ENCODE measurements at regions of chr11 and their contacts with region 1.

Region 1: GRCh38 chr11:95150946-95151684 is 61.5 kb downstream of the ENDOD1 start:
- DNase-seq: peak; percentile 90
- H3K4me3 Mint-ChIP-seq: peak overlapping the region; percentile 79
- H3K27ac Mint-ChIP-seq: peak overlapping the region; percentile 82
- H3K4me1 Mint-ChIP-seq: peaks cover 69% of the 10 kb centered on the region
- H3K27me3 Mint-ChIP-seq: no peaks in the 10 kb centered on the region
- CTCF ChIP-seq: peak; percentile 68

Region 2: GRCh38 chr11:94973099-94973968 is 177.8 kb before region 1 on chr11 and contains the starts of genes CWC15 and KDM4D:
- CTCF ChIA-PET with region 1: no interaction called
- intact Hi-C with region 1: loop called (anchors 5 kb)
- DNase-seq: peak; percentile 88
- H3K4me3 Mint-ChIP-seq: peak within 1 kb of the TSS; percentile 98
- H3K27ac Mint-ChIP-seq: peak within 1 kb of the TSS; percentile 98
- H3K4me1 Mint-ChIP-seq: peaks cover 9% of the 10 kb centered on the region
- H3K27me3 Mint-ChIP-seq: no peaks in the 10 kb centered on the region
- CTCF ChIP-seq: no peak
- total RNA-seq, gene CWC15: 38.8 and 48.6 TPM in 2 replicates
- total RNA-seq, gene KDM4D: 0.68 and 1.2 TPM in 2 replicates

Region 3: GRCh38 chr11:95364324-95365295 is 213.5 kb after region 1 on chr11:
- CTCF ChIA-PET with region 1: no interaction called
- intact Hi-C with region 1: loop called (anchors 10 kb)
- DNase-seq: peak; percentile 24
- H3K4me3 Mint-ChIP-seq: peak overlapping the region; percentile 50
- H3K27ac Mint-ChIP-seq: peak overlapping the region; percentile 79
- H3K4me1 Mint-ChIP-seq: peaks cover 29% of the 10 kb centered on the region
- H3K27me3 Mint-ChIP-seq: no peaks in the 10 kb centered on the region
- CTCF ChIP-seq: no peak

Region 4: DNA sequence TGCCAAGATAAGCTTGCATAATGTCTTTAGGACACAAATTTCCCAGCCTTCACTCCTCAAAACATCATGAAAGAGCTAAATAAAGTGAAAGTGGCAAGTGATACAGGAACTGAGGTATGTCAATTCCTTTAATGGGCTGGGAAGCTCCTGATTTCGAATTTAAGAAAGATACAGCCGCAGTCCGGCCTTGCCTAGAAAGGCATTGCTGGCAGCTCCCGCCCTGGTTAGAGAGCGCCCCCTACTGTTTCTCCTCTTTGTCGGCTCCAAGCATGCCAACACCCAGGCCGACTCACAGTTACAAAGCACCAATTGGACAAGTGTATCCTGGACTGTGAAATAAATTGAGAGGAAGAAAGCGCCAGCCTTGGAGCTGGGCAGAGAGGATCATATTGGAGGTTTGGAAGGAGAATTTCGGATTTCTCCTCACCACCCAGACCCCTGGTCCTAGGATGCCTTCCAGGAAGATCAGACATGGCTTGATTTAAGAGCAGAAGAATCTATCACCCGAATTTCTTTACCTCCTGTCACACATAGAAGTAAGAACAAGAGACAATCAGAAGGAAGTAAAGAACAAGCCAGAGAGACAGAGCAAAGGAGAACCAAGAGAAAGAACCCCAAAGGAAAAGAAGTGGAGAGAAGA is 554.5 kb after region 1 on chr11:
- CTCF ChIA-PET with region 1: interaction called, 17 read pairs
- intact Hi-C with region 1: loop called (anchors 1 kb)
- DNase-seq: peak; percentile 84
- H3K4me3 Mint-ChIP-seq: no peak overlapping the region
- H3K27ac Mint-ChIP-seq: no peak overlapping the region
- H3K4me1 Mint-ChIP-seq: peaks cover under 1% of the 10 kb centered on the region
- H3K27me3 Mint-ChIP-seq: no peaks in the 10 kb centered on the region
- CTCF ChIP-seq: peak; percentile 65

Region 5: GRCh38 chr11:96424693-96425092 is 1273.6 kb after region 1 on chr11:
- CTCF ChIA-PET with region 1: no interaction called
- intact Hi-C with region 1: loop called (anchors 2 kb)
- DNase-seq: no peak
- H3K4me3 Mint-ChIP-seq: no peak overlapping the region
- H3K27ac Mint-ChIP-seq: no peak overlapping the region
- H3K4me1 Mint-ChIP-seq: peaks cover 22% of the 10 kb centered on the region
- H3K27me3 Mint-ChIP-seq: no peaks in the 10 kb centered on the region
- CTCF ChIP-seq: no peak